ENCODE measurements at regions of chr9 and their contacts with region 1.

Region 1: DNA sequence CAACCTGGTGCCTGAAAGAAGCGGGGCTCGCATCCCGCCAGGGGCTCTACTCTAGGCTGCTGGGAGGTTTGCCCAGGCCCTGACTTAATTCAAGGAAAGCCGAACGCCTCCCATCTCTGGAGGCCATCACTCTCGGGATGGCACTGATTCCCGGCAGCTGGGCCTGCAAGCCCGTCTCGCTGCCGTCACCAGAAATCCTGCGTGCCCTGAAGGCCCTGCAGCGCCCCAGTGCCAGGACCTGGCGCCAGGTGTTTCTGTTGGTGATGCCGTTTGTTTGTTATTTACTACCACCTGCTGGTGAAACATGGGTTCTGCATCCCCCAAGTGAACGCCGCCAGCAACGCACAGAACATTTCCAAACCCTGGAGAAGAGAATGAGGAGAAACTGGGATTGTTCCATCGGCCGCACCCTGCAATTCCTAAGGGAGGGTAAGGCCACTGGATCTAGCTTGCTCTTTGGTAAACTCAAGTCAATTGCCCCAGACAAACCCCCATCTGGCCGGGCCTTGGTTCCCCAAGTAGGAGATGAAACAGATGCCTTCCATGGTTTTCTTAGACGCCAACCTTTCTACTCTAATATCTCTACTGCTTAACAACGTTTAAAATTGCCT is 77.9 kb downstream of the AK8 start:
- DNase-seq: no peak
- H3K4me3 ChIP-seq: peak overlapping the region in 1 of 4 donors; percentile 24
- H3K27ac ChIP-seq: no peak overlapping the region
- H3K4me1 ChIP-seq: peaks cover 5 to 14% (median 6%) of the 10 kb centered on the region in 3 donors
- H3K27me3 ChIP-seq: peaks cover 0 to 40% (median 0%) of the 10 kb centered on the region in 4 donors
- CTCF ChIP-seq: peak; percentile 91 to 97 (median 94)
- POLR2A ChIP-seq: no peak

Region 2: GRCh38 chr9:132411091-132411508 is 389.0 kb before region 1 on chr9:
- intact Hi-C with region 1: loop called (anchors 10 kb)
- DNase-seq: no peak
- H3K4me3 ChIP-seq: peak overlapping the region; percentile 31 to 73 (median 43)
- H3K27ac ChIP-seq: no peak overlapping the region
- H3K4me1 ChIP-seq: peaks cover 19 to 40% (median 22%) of the 10 kb centered on the region in 3 donors
- H3K27me3 ChIP-seq: peaks cover 0 to 69% (median 13%) of the 10 kb centered on the region in 4 donors
- CTCF ChIP-seq: peak; percentile 40 to 75 (median 55)
- POLR2A ChIP-seq: no peak

Region 3: DNA sequence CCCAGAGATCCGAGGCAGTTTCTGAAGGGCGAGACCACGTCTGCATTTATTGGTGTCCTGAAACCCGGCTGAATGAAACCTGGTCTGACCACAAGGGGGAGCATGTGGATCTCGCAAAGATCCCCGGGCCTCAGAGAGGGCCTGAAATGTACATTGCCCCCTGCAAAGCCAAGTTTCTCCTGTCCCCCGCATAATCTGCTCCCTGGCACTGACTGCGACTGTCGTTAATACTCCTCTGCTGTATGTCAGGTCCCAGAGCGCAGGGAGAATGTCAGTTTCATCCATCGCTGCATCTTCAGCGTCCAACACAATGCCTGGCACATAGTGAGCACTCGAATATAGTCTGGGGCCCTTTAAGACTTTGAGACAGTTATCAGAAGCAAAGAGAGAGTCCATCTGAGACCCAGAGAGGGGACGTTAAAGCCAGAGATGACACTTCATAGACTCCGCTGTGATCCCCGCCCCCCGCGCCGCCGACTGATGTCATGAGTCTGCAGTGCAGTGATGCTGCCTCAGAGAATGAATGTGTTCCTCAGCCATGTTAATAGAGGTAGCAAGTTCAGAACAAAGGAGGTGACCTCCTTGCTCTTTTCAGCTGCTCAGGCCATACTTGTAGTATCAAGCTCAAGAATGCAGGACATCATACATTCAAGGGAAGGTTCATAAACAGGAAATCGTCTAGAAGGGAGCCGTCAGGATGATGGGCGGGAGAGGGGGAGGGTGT is 292.2 kb before region 1 on chr9:
- intact Hi-C with region 1: loop called (anchors 10 kb)
- DNase-seq: no peak
- H3K4me3 ChIP-seq: no peak overlapping the region
- H3K27ac ChIP-seq: no peak overlapping the region
- H3K4me1 ChIP-seq: peaks cover 0 to 8% (median 0%) of the 10 kb centered on the region in 3 donors
- H3K27me3 ChIP-seq: peaks cover 0 to 92% (median 0%) of the 10 kb centered on the region in 4 donors
- CTCF ChIP-seq: peak; percentile 47 to 83 (median 66)
- POLR2A ChIP-seq: no peak

Region 4: DNA sequence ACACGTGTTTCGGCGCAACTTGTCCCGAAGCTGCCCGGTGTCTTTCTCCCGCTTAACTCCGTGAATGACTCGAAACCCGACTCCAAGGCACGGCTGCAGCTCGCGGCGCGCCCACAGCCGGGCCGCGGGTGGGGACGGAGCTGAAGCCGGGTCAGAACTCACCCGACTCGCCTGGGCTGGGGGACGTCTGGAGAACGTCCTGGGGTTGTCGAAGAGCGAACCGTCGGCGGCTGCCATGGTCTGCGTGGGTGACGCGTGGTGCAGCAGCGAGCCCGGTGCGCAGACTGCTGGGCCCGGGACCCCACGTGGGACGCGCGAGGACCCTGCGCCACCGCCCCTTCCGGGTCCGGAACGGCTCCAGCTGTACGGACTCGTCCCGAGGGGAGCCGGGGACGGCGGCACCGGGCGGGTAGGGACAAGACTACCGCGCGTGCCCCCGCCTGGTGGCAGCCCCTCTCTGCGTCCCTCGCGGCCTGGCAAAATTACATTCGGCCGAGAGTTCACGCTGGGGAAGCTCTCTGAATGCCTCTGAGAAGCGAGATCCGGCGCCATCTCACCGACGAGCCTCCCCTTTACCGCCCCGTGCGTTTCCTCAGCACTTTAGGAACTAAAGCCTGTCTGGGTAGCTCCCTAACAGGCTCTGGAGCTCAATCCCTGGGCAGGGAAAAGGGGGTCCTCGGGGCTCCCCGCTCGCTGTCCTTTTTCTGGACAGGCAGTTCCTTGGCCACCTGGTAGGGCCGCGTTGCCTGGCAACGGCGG is 130.3 kb before region 1 on chr9 and contains the start of gene DDX31:
- intact Hi-C with region 1: loop called (anchors 10 kb)
- DNase-seq: peak; percentile 38
- H3K4me3 ChIP-seq: peak within 1 kb of the TSS; percentile 89 to 99 (median 94)
- H3K27ac ChIP-seq: peak within 1 kb of the TSS; percentile 94 to 99 (median 98)
- H3K4me1 ChIP-seq: peaks cover 21 to 62% (median 26%) of the 10 kb centered on the region in 3 donors
- H3K27me3 ChIP-seq: no peaks in the 10 kb centered on the region
- CTCF ChIP-seq: peak in 2 of 6 experiments; percentile 3 to 13
- POLR2A ChIP-seq: peak in 2 of 4 donors; percentile 50 to 56
- total RNA-seq, gene DDX31: 10.2 to 18.3 (median 11.8) TPM

Measured in esophagus squamous epithelium (tissue), 5 donors.